Common myeloid progenitor, CD34-positive (primary cell): ENCODE measurements at regions of chr10 and their contacts with region 1.

Region 1: GRCh38 chr10:103564776-103565520 is 71.4 kb downstream of the NEURL1 start:
- DNase-seq: peak in 1 of 3 donors; percentile 34
- H3K4me3 ChIP-seq: no peak overlapping the region
- H3K27ac ChIP-seq: no peak overlapping the region
- H3K4me1 ChIP-seq: no peaks in the 10 kb centered on the region
- H3K27me3 ChIP-seq: no peaks in the 10 kb centered on the region

Region 2: GRCh38 chr10:103576862-103577261 is 11.9 kb after region 1 on chr10:
- CTCF ChIA-PET with region 1: interaction called, 12 read pairs
- POLR2A ChIA-PET with region 1: no interaction called
- DNase-seq: peak in 2 of 3 donors; percentile 78 to 81
- H3K4me3 ChIP-seq: no peak overlapping the region
- H3K27ac ChIP-seq: no peak overlapping the region
- H3K4me1 ChIP-seq: peaks cover 0 to 23% (median 8%) of the 10 kb centered on the region in 4 experiments
- H3K27me3 ChIP-seq: peaks cover 0 to 1% (median 0%) of the 10 kb centered on the region in 5 experiments

Region 3: DNA sequence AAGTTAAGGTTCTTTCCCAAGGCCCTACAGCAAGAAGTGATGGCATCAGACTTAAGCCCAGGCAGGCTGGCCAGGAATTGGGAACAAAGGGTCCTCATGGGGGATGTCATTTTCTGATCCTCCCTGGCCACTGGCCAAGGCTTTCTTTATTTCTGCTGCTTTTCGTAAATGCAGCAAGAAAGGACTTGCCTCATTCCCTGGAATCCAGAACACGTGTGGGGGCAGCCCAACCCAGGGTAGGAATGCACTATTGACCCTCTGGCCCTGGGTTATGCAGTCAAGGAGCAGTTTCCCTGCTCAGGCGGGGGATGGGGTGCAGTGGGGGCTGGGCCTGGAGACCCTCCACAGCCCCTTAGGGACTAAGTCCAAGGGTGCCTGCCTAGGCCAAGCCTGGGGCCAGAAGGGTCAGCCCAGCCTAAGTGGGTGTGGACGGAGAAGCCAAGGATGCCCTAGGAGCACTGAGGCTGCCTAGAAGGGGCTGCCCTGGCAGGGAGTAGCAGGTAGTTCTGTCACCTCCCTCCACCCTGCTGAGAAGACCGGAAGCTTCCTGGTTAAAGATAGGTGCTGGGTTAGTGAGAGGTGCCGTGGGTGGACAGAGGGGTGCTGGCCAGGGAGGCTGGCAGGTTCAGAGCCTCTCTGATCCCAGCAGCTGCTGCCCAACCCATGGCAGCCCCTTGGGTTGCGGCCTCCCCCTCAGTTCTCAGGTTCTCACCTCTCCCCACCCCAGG is 111.3 kb after region 1 on chr10:
- CTCF ChIA-PET with region 1: no interaction called
- POLR2A ChIA-PET with region 1: no interaction called
- DNase-seq: no peak
- H3K4me3 ChIP-seq: no peak overlapping the region
- H3K27ac ChIP-seq: no peak overlapping the region
- H3K4me1 ChIP-seq: peaks cover 4 to 17% (median 10%) of the 10 kb centered on the region in 4 experiments
- H3K27me3 ChIP-seq: no peaks in the 10 kb centered on the region

Region 4: GRCh38 chr10:103881416-103882284 is 316.7 kb after region 1 on chr10:
- CTCF ChIA-PET with region 1: no interaction called
- POLR2A ChIA-PET with region 1: no interaction called
- DNase-seq: no peak
- H3K4me3 ChIP-seq: no peak overlapping the region
- H3K27ac ChIP-seq: no peak overlapping the region
- H3K4me1 ChIP-seq: no peaks in the 10 kb centered on the region
- H3K27me3 ChIP-seq: no peaks in the 10 kb centered on the region